GM10248 (cell line): ENCODE measurements at regions of chr11 and their contacts with region 1.

Region 1: DNA sequence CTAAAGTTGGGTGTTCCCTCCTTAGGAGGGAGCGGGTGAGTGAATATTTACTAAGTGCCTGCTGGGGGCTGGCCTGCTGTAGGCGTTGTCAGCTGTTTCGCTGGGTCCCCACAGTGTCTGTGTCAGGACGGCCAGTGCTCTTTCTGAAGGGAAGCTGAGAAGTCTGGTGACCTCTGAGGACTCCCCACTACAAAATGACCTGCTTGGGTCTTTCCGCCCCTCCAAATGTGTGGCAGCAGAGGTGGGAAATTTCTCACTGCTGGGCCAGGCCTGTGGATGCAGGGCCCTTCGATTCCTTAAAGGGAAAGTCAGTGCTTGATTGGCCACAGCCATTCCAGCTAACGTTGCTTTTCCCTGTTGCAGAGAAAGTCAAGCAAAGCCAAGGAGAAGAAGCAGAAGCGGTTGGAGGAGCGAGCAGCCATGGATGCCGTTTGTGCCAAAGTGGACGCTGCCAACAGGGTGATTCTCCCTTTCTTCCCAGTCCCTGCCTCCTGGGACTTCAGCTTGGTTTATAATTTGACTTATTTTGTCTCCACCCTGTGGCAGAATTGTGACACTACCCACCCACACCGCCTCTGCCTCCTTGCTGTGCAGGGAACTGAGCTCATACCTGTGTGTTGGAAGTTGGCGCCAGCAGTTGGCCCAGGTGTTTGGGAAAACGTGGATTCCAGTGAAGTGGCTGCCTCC is 6.8 kb downstream of the NAA40 start:
- DNase-seq: peak; percentile 64
- CTCF ChIP-seq: peak; percentile 76

Region 2: DNA sequence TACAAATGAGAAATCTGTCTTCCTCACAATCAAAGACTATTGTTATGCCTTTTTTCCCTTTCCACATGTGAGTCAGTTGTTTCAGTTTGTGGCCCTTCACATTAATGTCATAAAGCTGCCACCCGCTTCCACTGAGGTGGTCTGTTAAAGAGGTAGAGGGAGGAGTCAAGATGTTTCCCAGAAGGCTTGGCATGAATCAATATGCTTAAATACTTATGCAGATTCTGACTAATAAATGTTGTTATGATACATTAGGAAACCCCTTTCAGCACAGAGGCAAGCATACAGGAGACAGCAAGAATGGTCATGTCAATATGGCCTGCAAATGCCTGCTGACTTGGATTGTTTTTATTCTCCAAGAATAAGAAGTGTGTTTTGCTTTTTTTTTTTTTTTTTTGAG is 257.8 kb before region 1 on chr11:
- CTCF ChIA-PET with region 1: no interaction called
- POLR2A ChIA-PET with region 1: no interaction called
- DNase-seq: no peak
- CTCF ChIP-seq: no peak

Region 3: DNA sequence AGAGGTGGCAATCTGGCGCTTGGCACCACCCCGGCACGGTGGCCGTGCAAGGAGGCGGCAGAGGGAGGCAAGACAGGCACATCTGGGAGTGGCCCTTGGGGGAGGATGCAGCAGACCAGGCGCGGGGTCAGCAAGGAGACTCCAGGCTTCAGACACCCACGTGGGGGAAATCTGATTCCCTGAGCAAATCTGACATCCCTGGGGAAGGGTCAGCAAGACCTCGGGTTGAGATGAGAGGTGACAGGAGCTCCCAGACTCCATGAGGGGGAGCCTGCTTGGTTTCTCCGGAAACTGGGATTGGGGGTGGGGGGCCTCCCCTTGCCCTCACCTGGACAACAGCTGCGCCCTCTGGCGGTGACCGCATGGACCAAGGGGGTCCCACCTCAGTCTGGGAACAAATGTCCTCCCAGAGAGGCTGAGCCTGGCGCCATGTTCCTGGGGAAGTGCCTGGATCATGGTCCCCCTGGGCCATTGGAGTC is 24.6 kb before region 1 on chr11:
- CTCF ChIA-PET with region 1: interaction called, 10 read pairs
- POLR2A ChIA-PET with region 1: no interaction called
- DNase-seq: peak; percentile 71
- CTCF ChIP-seq: peak; percentile 72

Region 4: DNA sequence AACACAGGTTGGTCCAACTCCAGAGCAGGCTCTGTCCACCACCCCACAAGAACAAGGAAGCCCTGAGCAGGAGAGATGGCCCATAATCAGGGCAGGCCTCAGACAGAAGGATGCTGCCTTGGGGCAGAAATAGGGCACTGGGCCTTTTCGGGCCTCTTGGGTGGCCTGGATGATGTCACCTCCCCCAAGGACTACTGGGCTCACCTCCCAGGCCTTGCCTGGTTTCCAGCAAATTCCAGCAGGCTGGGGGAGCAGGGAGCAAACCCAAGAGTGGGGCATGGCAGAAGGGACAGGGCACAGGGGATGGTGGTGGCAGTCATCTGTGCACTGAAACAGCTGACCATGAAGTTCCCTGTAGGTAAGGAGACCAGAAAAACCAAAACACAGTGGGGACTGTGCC is 12.2 kb before region 1 on chr11:
- CTCF ChIA-PET with region 1: interaction called, 11 read pairs
- POLR2A ChIA-PET with region 1: no interaction called
- DNase-seq: no peak
- CTCF ChIP-seq: no peak

Region 5: DNA sequence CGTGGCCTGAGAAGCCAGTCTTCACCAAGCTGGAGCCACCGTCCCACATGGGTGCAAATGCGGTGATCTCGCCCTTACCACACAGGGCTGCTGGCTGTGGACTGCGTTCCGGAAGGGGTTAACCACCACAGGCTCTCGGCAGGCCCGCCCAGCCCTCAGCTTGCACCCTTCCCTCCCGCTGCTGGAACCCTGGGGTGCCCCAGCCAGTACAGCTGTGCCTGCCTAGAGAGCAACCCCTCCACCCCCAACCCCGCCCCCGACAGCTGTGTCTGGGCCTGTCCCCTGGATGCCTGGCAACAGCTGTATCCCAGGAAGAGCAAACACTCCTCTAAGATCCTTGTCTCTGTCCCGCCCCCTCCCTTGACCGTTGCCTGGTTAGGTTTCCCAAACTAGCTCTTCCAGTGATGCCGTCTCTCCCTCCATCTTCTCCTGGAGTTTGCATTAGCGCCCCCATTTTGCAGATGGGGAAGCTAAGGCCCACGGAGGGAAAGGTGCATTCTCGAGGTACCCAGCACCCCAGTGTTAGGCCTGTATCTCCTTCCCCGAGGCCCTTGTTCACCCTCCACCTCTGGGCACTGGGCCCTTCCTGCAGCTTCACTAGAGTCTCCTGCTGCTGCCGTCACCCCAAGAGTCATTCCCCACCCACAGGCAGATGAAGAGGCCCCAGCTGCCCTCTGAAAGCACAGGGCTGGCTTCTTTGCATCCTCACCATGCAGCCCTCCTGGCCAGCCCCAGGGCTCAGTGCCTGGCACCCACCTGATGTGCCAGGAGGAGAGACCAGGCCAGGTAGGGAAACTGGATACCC is 16.2 kb after region 1 on chr11:
- CTCF ChIA-PET with region 1: interaction called, 46 read pairs
- POLR2A ChIA-PET with region 1: no interaction called
- DNase-seq: no peak
- CTCF ChIP-seq: no peak